ENCODE measurements at regions of chr5 and their contacts with region 1.

Region 1: GRCh38 chr5:132526290-132526973 is 16.9 kb downstream of the IL5 start:
- DNase-seq: peak; percentile 66
- ATAC-seq: peak; percentile 93
- H3K4me3 ChIP-seq: peak overlapping the region; percentile 39 to 65 (median 44)
- H3K27ac ChIP-seq: no peak overlapping the region
- H3K4me1 ChIP-seq: peaks cover 14% of the 10 kb centered on the region
- H3K27me3 ChIP-seq: no peaks in the 10 kb centered on the region
- CTCF ChIP-seq: peak; percentile 85
- EP300 ChIP-seq: no peak
- POLR2A ChIP-seq: no peak
- RAD21 ChIP-seq: peak; percentile 82

Region 2: GRCh38 chr5:132321109-132321721 is 205.2 kb before region 1 on chr5:
- CTCF ChIA-PET with region 1: no interaction called
- POLR2A ChIA-PET with region 1: no interaction called
- in situ Hi-C with region 1: no loop called
- intact Hi-C with region 1: no loop called
- DNase-seq: peak; percentile 67
- ATAC-seq: peak; percentile 100
- H3K4me3 ChIP-seq: peak overlapping the region in 1 of 3 experiments; percentile 12; a peak in 1 of 6 replicates
- H3K27ac ChIP-seq: peak overlapping the region; percentile 37
- H3K4me1 ChIP-seq: peaks cover 25% of the 10 kb centered on the region
- H3K27me3 ChIP-seq: no peaks in the 10 kb centered on the region
- CTCF ChIP-seq: peak; percentile 58
- EP300 ChIP-seq: no peak
- POLR2A ChIP-seq: no peak
- RAD21 ChIP-seq: 0 out of 2 replicates have a peak, but pooled peaks have one; percentile 25

Region 3: GRCh38 chr5:132556763-132557477 is 30.5 kb after region 1 on chr5 and contains the start of gene RAD50:
- CTCF ChIA-PET with region 1: no interaction called
- POLR2A ChIA-PET with region 1: interaction called, 6 read pairs
- in situ Hi-C with region 1: no loop called
- intact Hi-C with region 1: loop called (anchors 1 kb)
- DNase-seq: peak; percentile 85
- ATAC-seq: peak; percentile 96
- H3K4me3 ChIP-seq: peak within 1 kb of the TSS; percentile 71 to 73 (median 72)
- H3K27ac ChIP-seq: peak within 1 kb of the TSS; percentile 88
- H3K4me1 ChIP-seq: peaks cover 17% of the 10 kb centered on the region; the same call in 1 of the 2 replicates
- H3K27me3 ChIP-seq: no peaks in the 10 kb centered on the region; a peak in 1 of 5 replicates
- CTCF ChIP-seq: no peak
- EP300 ChIP-seq: no peak; a peak in 1 of 4 replicates
- POLR2A ChIP-seq: peak; percentile 78 to 94
- RAD21 ChIP-seq: no peak
- total RNA-seq, gene RAD50: 23.4 and 40.1 TPM in 2 replicates

Region 4: GRCh38 chr5:132586063-132586462 is 59.6 kb after region 1 on chr5:
- CTCF ChIA-PET with region 1: no interaction called
- POLR2A ChIA-PET with region 1: no interaction called
- in situ Hi-C with region 1: no loop called
- intact Hi-C with region 1: loop called (anchors 5 kb)
- DNase-seq: no peak
- ATAC-seq: no peak
- H3K4me3 ChIP-seq: no peak overlapping the region
- H3K27ac ChIP-seq: no peak overlapping the region
- H3K4me1 ChIP-seq: no peaks in the 10 kb centered on the region
- H3K27me3 ChIP-seq: no peaks in the 10 kb centered on the region
- CTCF ChIP-seq: no peak
- EP300 ChIP-seq: no peak
- POLR2A ChIP-seq: no peak
- RAD21 ChIP-seq: no peak

Region 5: DNA sequence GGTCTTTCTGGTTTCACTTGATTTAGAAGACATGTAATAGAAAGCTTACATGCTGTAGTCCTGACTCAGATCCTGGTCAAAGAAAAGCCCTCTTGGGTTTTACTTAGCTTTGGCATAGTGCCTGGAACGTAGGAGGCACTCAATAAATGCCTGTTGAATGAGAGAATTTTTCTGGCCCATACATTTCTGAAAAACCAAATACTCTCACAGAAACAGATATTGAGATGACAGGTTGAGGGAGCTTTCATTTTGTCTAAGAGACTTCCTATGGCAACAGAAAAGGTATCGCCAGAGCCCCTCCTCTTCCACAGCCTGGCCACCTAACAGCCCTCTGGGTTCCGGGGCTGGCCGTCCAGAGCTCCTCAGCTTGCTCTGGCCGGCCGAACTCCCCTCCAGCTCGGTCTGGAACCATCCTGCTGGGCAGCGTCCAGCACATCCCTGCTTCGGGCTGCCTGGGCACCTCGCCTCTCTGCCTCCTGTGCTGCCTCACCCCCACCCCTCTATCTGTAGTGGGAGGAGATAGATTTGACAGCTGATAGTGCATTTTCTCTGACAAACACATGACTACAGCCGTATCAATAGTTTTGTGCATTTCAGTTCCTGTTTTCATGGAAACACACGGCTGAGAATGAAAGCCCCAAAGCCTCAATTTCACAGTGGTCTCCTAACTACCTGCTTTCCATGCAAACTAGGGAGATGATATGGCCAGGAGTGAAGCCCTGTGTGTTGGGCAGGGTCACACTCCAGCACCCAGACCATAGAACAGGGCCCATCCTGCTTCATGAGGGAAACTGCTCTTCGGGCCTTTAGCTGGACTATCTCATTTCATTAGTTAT is 148.5 kb after region 1 on chr5:
- CTCF ChIA-PET with region 1: interaction called, 12 read pairs
- POLR2A ChIA-PET with region 1: no interaction called
- in situ Hi-C with region 1: no loop called
- intact Hi-C with region 1: loop called (anchors 1 kb)
- DNase-seq: peak; percentile 24
- ATAC-seq: peak; percentile 73
- H3K4me3 ChIP-seq: peak overlapping the region in 2 of 3 experiments; percentile 23 to 36; a peak in 3 of 6 replicates
- H3K27ac ChIP-seq: no peak overlapping the region
- H3K4me1 ChIP-seq: peaks cover 27% of the 10 kb centered on the region
- H3K27me3 ChIP-seq: peaks cover 1 to 11% of the 10 kb centered on the region in 2 experiments; a peak in 3 of 5 replicates
- CTCF ChIP-seq: no peak
- EP300 ChIP-seq: no peak
- POLR2A ChIP-seq: no peak
- RAD21 ChIP-seq: no peak

Region 6: DNA sequence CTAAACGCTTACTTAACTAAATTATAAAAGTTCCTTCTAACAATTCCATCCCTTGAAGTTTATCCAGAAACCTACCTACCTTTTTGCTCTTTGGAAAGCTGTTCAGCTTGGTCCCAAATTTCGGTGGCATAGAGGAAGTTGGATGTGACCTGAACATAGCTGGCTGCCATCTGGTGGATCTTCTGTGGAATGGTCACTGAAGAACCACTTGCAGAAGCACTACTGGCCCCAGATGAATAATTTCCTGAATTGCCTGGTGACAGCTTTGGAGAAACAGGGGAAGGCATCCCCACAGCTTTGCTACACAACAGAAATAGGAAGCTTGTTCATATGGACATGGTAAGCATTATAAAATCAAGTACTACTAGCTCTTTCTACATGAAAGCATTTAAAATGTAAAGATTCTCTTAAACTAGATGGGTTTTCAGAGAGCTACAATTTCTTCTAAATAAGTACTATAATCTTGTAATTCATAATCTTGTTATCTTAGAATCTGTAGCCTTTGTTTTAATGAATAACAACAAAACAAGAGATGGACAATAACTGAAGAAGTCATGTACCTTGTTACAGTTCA is 356.9 kb after region 1 on chr5:
- CTCF ChIA-PET with region 1: no interaction called
- POLR2A ChIA-PET with region 1: no interaction called
- in situ Hi-C with region 1: no loop called
- intact Hi-C with region 1: loop called (anchors 10 kb)
- DNase-seq: peak; percentile 78
- ATAC-seq: peak; percentile 94
- H3K4me3 ChIP-seq: no peak overlapping the region
- H3K27ac ChIP-seq: peak overlapping the region; percentile 16
- H3K4me1 ChIP-seq: peaks cover 17% of the 10 kb centered on the region
- H3K27me3 ChIP-seq: no peaks in the 10 kb centered on the region
- CTCF ChIP-seq: peak; percentile 85
- EP300 ChIP-seq: no peak
- POLR2A ChIP-seq: no peak
- RAD21 ChIP-seq: peak; percentile 81

Measured in HepG2 (cell line).